Aorta (tissue), 5 donors: ENCODE measurements at regions of chr9 and their contacts with region 1.

Region 1: DNA sequence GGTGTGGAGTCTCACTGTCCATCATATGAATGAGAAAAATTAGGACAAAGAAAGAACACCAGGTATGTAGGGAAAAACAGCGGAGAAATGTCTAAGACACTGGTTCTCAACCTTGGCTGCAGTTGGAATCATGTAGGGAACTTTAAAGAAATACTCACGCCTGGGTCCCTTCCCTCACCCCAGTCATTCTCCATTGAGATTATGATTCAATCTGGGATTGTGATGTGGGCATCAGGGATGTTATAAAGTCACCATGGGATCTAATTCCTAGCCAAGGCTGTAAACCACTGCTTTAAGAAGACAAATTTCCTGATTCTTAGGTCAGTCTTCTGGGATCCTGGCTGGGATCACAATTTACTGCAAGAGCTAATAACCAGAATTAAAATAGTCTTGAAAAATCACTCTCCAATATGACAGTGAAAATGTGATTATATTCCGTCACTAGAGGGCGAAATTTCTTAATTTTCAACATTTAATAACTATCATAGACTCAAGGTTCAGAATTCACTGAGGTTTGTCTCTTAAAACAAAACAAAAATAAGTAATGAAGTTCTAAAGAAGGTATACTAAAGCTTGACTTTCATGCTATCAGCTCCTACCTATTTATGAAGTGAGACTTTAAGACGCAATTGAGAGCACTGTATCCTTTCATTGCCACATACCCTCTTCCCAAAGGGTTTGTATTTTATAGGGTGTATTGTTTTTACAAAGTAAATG is 60.5 kb downstream of the GLDC start:
- DNase-seq: no peak
- ATAC-seq: no peak
- H3K4me3 ChIP-seq: no peak overlapping the region
- H3K27ac ChIP-seq: no peak overlapping the region
- H3K4me1 ChIP-seq: no peaks in the 10 kb centered on the region
- H3K27me3 ChIP-seq: no peaks in the 10 kb centered on the region

Region 2: GRCh38 chr9:6525326-6526045 is 59.6 kb before region 1 on chr9:
- intact Hi-C with region 1: no loop called
- DNase-seq: no peak
- ATAC-seq: no peak
- H3K4me3 ChIP-seq: no peak overlapping the region
- H3K27ac ChIP-seq: no peak overlapping the region
- H3K4me1 ChIP-seq: no peaks in the 10 kb centered on the region
- H3K27me3 ChIP-seq: no peaks in the 10 kb centered on the region

Region 3: DNA sequence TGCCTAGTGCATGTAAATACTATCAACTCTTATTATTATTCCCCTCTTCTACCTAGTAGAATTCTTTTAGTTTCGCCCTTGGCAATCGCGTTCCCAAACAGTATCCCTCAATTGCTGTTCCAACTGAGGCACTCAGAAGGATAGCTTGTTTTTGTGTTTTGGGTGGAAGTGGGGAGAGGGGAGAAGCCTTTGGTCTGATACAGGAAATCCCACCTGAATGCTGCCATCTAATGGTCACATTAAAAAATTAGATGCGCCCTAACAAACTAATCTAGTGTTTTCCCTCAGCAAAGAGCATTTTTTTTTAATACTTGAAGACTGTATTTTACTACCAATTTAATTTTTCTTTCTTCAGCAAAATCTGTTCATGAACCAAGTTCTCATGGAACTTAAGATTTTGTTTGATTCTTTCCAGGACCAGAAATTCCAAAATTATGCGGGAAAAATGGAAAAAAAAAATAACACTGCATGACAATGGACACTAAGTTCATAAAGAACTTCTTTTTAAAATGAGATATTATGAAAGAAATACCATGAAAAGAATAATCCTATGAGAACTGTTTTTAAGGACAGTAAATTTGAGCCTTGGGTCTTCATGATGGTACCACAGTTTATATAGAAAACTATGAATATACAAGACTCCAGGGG is 82.7 kb after region 1 on chr9:
- intact Hi-C with region 1: loop called (anchors 5 to 10 kb)
- DNase-seq: no peak
- ATAC-seq: no peak
- H3K4me3 ChIP-seq: no peak overlapping the region
- H3K27ac ChIP-seq: no peak overlapping the region
- H3K4me1 ChIP-seq: no peaks in the 10 kb centered on the region
- H3K27me3 ChIP-seq: no peaks in the 10 kb centered on the region

Region 4: DNA sequence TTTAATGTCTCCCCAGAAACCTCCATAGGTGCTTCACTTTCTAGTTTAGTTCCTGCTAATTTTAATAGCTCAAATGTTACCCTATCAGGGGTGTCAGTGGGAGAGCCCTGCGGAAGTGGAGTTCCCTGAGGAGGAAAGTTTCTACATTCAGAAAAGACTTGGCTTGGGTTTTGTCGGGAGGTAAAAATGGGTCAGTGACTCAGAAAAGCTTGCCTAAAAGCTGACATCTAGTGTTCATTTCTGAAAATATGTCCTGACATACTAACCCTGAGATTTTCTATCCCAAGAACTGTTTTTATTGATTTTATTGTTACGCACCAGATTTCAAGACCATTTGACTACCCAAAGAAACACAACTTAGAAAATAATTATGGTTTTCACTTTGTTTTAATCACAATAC is 101.4 kb after region 1 on chr9:
- intact Hi-C with region 1: loop called in 1 of 2 experiments (anchors 5 kb)
- DNase-seq: no peak
- ATAC-seq: no peak
- H3K4me3 ChIP-seq: no peak overlapping the region
- H3K27ac ChIP-seq: no peak overlapping the region
- H3K4me1 ChIP-seq: no peaks in the 10 kb centered on the region
- H3K27me3 ChIP-seq: no peaks in the 10 kb centered on the region